Calu3 (cell line): ENCODE measurements at regions of chr1 and their contacts with region 1.

Region 1: GRCh38 chr1:231039161-231040018 is 664 bp downstream of the FAM89A start:
- DNase-seq: peak; percentile 42
- H3K4me3 Mint-ChIP-seq: peak overlapping the region; percentile 79
- H3K27ac Mint-ChIP-seq: no peak overlapping the region
- H3K4me1 Mint-ChIP-seq: peaks cover 18% of the 10 kb centered on the region
- H3K27me3 Mint-ChIP-seq: no peaks in the 10 kb centered on the region
- CTCF ChIP-seq: no peak

Region 2: DNA sequence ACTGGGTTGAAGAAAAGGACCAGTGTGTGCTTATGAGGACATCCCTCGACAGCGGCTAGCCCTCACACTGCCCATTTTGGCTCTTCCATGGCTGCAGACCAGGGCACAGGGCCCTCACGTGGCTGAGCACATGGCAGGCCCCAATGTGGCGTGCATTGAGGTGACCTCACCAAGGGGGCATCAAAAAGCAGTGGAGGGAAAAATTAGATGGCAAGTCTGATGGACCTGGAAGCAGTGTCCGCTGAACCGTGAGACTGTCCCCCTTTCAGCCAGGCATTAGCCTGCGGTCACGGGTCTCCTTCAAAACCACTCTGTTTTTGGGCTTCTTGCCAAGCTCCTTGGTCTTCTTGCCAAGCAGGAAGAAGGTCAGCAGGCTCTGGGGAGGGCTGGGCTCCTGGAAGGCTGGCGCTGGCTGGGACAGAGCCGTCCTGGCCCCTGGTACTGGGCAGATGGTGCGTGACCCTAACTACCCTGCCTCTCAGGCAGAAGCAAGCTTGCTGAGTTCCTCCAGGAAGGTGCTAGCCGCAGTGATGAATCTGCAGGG is 153.3 kb after region 1 on chr1:
- CTCF ChIA-PET with region 1: no interaction called
- intact Hi-C with region 1: loop called (anchors 10 kb)
- DNase-seq: peak; percentile 92
- H3K4me3 Mint-ChIP-seq: no peak overlapping the region
- H3K27ac Mint-ChIP-seq: no peak overlapping the region
- H3K4me1 Mint-ChIP-seq: peaks cover 35% of the 10 kb centered on the region
- H3K27me3 Mint-ChIP-seq: peaks cover 39% of the 10 kb centered on the region
- CTCF ChIP-seq: no peak